T-cell (primary cell): ENCODE measurements at regions of chrX and their contacts with region 1.

Region 1: GRCh38 chrX:20487227-20487626 is 220.5 kb upstream of the RPS6KA3 start:
- DNase-seq: no peak
- ATAC-seq: no peak
- H3K4me3 ChIP-seq: no peak overlapping the region
- H3K4me3 Mint-ChIP-seq: no peak overlapping the region
- H3K27ac ChIP-seq: no peak overlapping the region
- H3K27ac Mint-ChIP-seq: no peak overlapping the region
- H3K4me1 ChIP-seq: no peaks in the 10 kb centered on the region
- H3K4me1 Mint-ChIP-seq: no peaks in the 10 kb centered on the region
- H3K27me3 ChIP-seq: no peaks in the 10 kb centered on the region
- H3K27me3 Mint-ChIP-seq: peaks cover 0 to 13% of the 10 kb centered on the region in 2 donors

Region 2: DNA sequence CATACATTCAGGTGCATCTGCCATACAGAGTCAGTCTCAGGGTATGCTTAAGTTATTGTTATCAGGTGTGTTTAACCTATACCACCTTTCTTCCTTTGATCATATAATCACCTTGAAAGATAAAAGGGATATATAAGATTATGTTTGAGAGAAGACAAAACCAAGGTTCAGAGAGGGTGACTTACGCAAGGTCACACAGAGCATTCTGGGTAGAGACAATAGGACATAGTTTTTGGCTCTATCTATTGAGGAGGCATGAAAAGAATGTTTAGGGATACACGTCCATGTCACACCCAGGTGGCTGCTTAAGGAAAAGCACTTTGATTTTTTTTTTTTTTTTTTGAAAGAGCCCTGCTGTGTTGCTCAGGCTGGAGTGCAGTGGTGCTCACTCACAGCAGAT is 106.6 kb after region 1 on chrX:
- CTCF ChIA-PET with region 1: interaction called in 1 of 2 experiments, 10 read pairs
- POLR2A ChIA-PET with region 1: no interaction called
- DNase-seq: no peak
- ATAC-seq: no peak
- H3K4me3 ChIP-seq: no peak overlapping the region
- H3K4me3 Mint-ChIP-seq: no peak overlapping the region
- H3K27ac ChIP-seq: no peak overlapping the region
- H3K27ac Mint-ChIP-seq: no peak overlapping the region
- H3K4me1 ChIP-seq: no peaks in the 10 kb centered on the region
- H3K4me1 Mint-ChIP-seq: no peaks in the 10 kb centered on the region
- H3K27me3 ChIP-seq: peaks cover 0 to 3% of the 10 kb centered on the region in 2 experiments
- H3K27me3 Mint-ChIP-seq: peaks cover 2 to 7% of the 10 kb centered on the region in 2 donors

Region 3: GRCh38 chrX:20680998-20681397 is 193.8 kb after region 1 on chrX:
- CTCF ChIA-PET with region 1: no interaction called
- POLR2A ChIA-PET with region 1: no interaction called
- DNase-seq: no peak
- ATAC-seq: no peak
- H3K4me3 ChIP-seq: no peak overlapping the region
- H3K4me3 Mint-ChIP-seq: no peak overlapping the region
- H3K27ac ChIP-seq: no peak overlapping the region
- H3K27ac Mint-ChIP-seq: no peak overlapping the region
- H3K4me1 ChIP-seq: no peaks in the 10 kb centered on the region
- H3K4me1 Mint-ChIP-seq: no peaks in the 10 kb centered on the region
- H3K27me3 ChIP-seq: no peaks in the 10 kb centered on the region
- H3K27me3 Mint-ChIP-seq: peaks cover 3 to 9% of the 10 kb centered on the region in 2 donors